ENCODE measurements at regions of chr17 and their contacts with region 1.

Region 1: GRCh38 chr17:4366327-4367063 is at the start of gene UBE2G1:
- DNase-seq: peak; percentile 99
- ATAC-seq: peak; percentile 81
- H3K4me3 Mint-ChIP-seq: peak within 1 kb of the TSS; percentile 86
- H3K27ac Mint-ChIP-seq: peak within 1 kb of the TSS; percentile 93
- H3K4me1 Mint-ChIP-seq: peaks cover 47% of the 10 kb centered on the region
- H3K27me3 Mint-ChIP-seq: no peaks in the 10 kb centered on the region
- CTCF ChIP-seq: no peak
- total RNA-seq, gene UBE2G1: 66.5 and 66.6 TPM in 2 replicates

Region 2: GRCh38 chr17:2711601-2712299 is 1654.7 kb before region 1 on chr17 and contains the start of gene CLUH:
- CTCF ChIA-PET with region 1: no interaction called
- POLR2A ChIA-PET with region 1: no interaction called
- intact Hi-C with region 1: loop called (anchors 5 kb)
- DNase-seq: peak; percentile 96
- ATAC-seq: peak; percentile 83
- H3K4me3 Mint-ChIP-seq: peak within 1 kb of the TSS; percentile 90
- H3K27ac Mint-ChIP-seq: peak within 1 kb of the TSS; percentile 83
- H3K4me1 Mint-ChIP-seq: peaks cover 37% of the 10 kb centered on the region
- H3K27me3 Mint-ChIP-seq: no peaks in the 10 kb centered on the region
- CTCF ChIP-seq: no peak
- total RNA-seq, gene CLUH: 101 and 115 TPM in 2 replicates

Region 3: GRCh38 chr17:4263282-4264215 is 102.9 kb before region 1 on chr17 and contains the start of gene ANKFY1:
- CTCF ChIA-PET with region 1: no interaction called
- POLR2A ChIA-PET with region 1: interaction called, 4 read pairs
- intact Hi-C with region 1: loop called (anchors 1 kb)
- DNase-seq: peak; percentile 98
- ATAC-seq: peak; percentile 98
- H3K4me3 Mint-ChIP-seq: peak within 1 kb of the TSS; percentile 95
- H3K27ac Mint-ChIP-seq: peak within 1 kb of the TSS; percentile 86
- H3K4me1 Mint-ChIP-seq: peaks cover 34% of the 10 kb centered on the region
- H3K27me3 Mint-ChIP-seq: no peaks in the 10 kb centered on the region
- CTCF ChIP-seq: no peak
- total RNA-seq, gene ANKFY1: 41.6 and 50.2 TPM in 2 replicates

Region 4: GRCh38 chr17:4304417-4305027 is 62.0 kb before region 1 on chr17:
- CTCF ChIA-PET with region 1: no interaction called
- POLR2A ChIA-PET with region 1: interaction called, 3 read pairs
- intact Hi-C with region 1: loop called (anchors 2 kb)
- DNase-seq: no peak
- ATAC-seq: peak; percentile 81
- H3K4me3 Mint-ChIP-seq: no peak overlapping the region
- H3K27ac Mint-ChIP-seq: no peak overlapping the region
- H3K4me1 Mint-ChIP-seq: peaks cover 20% of the 10 kb centered on the region
- H3K27me3 Mint-ChIP-seq: no peaks in the 10 kb centered on the region
- CTCF ChIP-seq: peak; percentile 53

Region 5: DNA sequence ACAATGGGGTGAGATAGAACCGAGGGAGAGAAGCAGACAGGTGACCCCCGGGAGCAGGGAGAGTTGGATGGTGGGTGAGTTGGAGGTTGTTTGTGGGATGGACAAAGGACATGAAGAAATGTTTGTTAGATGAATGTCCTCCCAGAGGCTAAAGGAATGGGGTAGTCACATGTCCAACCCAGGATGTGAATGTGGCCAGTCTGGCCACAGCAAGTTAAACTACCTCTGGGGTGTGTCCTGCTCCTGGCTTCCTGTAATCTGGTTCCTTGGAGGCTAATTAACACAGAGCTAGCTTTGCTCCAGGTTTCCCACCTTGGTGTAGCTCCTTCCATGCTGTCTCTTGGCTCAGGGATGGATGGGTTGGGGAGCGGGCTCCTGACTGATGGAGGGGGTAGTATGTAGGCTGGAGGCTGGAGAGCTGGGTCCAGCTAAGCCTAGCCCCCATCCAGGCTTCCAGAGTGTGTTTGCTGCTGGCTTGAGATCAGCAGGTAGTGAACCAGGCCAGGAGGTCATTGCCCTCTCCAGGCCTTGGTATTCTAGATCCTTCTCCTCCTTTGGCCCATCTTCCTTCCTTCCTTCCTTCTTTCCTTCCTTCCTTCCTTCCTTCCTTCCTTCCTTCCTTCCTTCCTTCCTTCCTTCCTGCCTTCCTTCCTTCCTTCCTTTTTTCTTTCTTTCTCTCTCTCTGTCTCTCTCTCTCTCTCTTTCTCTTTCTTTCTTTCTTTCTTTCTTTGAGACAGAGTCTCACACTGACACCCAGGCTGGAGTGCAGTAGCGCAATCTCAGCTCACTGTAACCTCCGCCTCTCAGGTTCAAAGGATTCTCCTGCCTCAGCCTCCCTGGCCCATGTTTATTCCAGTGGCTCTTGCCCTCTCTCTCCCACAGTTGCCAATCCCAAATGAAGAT is 28.0 kb after region 1 on chr17:
- CTCF ChIA-PET with region 1: no interaction called
- POLR2A ChIA-PET with region 1: interaction called, 40 read pairs
- intact Hi-C with region 1: loop called (anchors 1 kb)
- DNase-seq: no peak
- ATAC-seq: no peak
- H3K4me3 Mint-ChIP-seq: peak overlapping the region; percentile 24
- H3K27ac Mint-ChIP-seq: peak overlapping the region; percentile 95
- H3K4me1 Mint-ChIP-seq: peaks cover 55% of the 10 kb centered on the region
- H3K27me3 Mint-ChIP-seq: no peaks in the 10 kb centered on the region
- CTCF ChIP-seq: no peak

Region 6: DNA sequence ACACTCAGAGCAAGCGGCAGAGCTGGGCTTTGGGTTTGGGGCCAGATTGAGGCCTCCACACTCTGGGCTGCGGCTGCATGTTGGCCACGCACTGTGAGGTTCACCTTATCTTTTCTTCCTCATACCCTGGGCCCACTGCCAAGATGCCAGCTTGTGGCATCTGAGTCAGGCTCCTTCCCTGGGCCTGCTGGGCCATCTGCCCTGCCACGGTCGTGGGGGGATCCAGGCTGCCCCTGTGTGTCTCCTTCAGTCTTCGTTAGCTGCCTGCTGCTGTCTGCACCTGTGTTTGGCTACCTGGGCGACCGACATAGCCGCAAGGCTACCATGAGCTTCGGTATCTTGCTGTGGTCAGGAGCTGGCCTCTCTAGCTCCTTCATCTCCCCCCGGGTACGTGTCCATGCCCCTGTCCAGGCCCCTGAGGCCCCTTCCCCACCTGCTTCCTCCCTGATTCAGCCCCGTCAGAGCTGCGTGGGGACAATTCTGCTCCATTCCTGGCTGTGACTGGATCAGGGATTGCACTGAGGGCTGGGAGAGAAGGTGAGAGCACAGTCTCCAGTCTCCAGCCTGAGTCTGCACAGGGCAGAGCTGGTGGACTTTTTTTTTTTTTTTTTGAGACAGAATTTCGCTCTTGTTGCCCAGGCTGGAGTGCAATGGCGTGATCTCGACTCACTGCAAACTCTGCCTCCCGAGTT is 78.4 kb after region 1 on chr17:
- CTCF ChIA-PET with region 1: no interaction called
- POLR2A ChIA-PET with region 1: no interaction called
- intact Hi-C with region 1: no loop called
- DNase-seq: no peak
- ATAC-seq: no peak
- H3K4me3 Mint-ChIP-seq: no peak overlapping the region
- H3K27ac Mint-ChIP-seq: no peak overlapping the region
- H3K4me1 Mint-ChIP-seq: peaks cover 2% of the 10 kb centered on the region
- H3K27me3 Mint-ChIP-seq: peaks cover 2% of the 10 kb centered on the region
- CTCF ChIP-seq: no peak

Region 7: DNA sequence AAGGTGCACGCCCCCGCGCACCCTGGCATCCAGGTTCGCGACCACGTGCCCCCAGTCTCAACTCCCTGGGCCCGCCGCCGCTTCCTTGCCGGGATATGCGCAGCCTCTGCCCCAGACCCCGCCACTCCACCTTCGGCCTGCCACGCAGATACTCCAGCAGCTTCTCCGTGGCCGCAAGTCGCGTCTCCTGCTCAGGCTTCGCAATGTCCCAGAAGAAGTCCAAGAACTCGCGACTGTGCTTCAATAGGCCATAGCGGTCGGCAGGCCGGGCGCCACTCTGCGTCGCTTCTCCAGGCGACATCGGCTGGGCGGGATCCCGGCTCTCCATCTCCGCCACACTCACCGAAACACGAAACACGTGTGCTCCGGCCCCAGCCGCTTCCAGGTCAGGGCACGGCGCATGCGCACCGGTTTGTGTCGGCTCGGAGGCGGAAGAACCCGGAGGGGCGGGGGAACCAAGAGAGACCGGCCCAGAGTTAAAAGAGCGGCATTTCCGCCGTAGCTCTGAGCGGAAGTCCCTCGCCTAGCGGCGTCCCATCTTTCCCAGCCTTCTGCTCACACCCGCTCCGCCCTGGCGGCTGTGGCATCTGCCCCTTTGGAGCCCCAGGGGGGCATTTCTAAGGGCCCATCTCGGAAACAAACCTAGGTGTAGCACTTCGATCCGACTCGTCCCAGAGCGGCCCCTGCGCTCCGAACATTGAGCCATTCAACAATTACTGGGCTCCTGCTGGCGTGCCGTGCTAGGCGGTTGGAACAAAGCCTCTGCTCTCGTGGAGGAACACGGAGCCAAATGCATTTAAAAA is 188.7 kb after region 1 on chr17 and contains the start of gene MYBBP1A:
- CTCF ChIA-PET with region 1: no interaction called
- POLR2A ChIA-PET with region 1: no interaction called
- intact Hi-C with region 1: loop called (anchors 1 kb)
- DNase-seq: peak; percentile 94
- ATAC-seq: peak; percentile 95
- H3K4me3 Mint-ChIP-seq: peak within 1 kb of the TSS; percentile 96
- H3K27ac Mint-ChIP-seq: peak within 1 kb of the TSS; percentile 98
- H3K4me1 Mint-ChIP-seq: peaks cover 28% of the 10 kb centered on the region
- H3K27me3 Mint-ChIP-seq: no peaks in the 10 kb centered on the region
- CTCF ChIP-seq: no peak
- total RNA-seq, gene MYBBP1A: 90.3 and 108 TPM in 2 replicates

Region 8: DNA sequence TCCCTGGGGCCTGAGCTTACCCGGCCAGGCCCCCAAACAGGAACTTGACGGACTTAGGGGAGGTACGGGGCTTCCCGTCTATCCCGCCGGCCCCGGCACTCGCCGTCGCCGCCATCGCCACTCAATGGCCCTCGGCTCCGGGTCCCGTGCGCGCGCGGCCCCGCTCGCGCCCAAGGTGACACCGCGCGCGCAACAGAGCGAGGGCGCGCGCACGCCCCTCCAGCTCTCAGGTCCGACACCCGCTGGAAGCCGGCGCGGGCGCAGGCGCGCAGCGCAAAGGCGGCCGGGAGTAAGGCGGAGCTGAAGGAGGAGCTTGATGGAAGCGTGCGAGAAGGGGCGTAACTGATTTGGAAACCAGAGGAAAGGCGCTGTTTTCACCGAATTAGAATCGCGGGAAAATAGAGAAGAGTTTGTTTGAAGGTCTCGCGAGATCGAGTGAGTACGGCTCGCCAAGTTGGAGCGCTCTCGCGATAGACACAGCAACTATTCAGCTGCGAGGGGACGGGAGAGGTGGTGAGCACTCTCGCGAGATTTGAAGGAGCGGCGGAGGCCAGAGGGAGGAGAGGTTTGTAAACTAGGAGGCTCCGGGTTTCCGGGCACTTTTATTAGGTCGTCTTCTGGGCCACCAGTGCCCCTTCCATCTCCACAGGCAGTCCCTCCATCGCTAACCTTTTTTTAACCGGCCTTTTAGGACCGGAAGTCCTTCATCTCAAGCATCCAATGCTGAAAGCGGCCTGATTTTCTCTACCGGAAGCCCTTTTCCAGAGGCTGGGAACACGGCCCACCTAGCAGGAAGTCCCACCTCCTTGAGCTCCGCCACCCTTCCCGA is 573.5 kb after region 1 on chr17 and contains the starts of genes RNF167 and SLC25A11:
- CTCF ChIA-PET with region 1: no interaction called
- POLR2A ChIA-PET with region 1: no interaction called
- intact Hi-C with region 1: loop called (anchors 10 kb)
- DNase-seq: peak; percentile 93
- ATAC-seq: peak; percentile 84
- H3K4me3 Mint-ChIP-seq: peak within 1 kb of the TSS; percentile 97
- H3K27ac Mint-ChIP-seq: peak within 1 kb of the TSS; percentile 98
- H3K4me1 Mint-ChIP-seq: peaks cover 69% of the 10 kb centered on the region
- H3K27me3 Mint-ChIP-seq: no peaks in the 10 kb centered on the region
- CTCF ChIP-seq: no peak
- total RNA-seq, gene RNF167: 93.3 and 108 TPM in 2 replicates
- total RNA-seq, gene SLC25A11: 35.3 and 35.8 TPM in 2 replicates